Activated CD4-positive, alpha-beta memory T cell treated with anti-CD3 and anti-CD28 coated beads, Interleukin-2, amount 10 ng/mL, durations not matched to agents 7 days and 5 days (primary cell): ENCODE measurements at regions of chr6 and their contacts with region 1.

Region 1: GRCh38 chr6:43506667-43507471 is 3.3 kb downstream of the LRRC73 start:
- DNase-seq: peak; percentile 83
- H3K4me3 Mint-ChIP-seq: no peak overlapping the region
- H3K27ac Mint-ChIP-seq: no peak overlapping the region
- H3K4me1 Mint-ChIP-seq: peaks cover 16% of the 10 kb centered on the region
- H3K27me3 Mint-ChIP-seq: peaks cover 17% of the 10 kb centered on the region

Region 2: GRCh38 chr6:41872147-41872546 is 1634.7 kb before region 1 on chr6:
- CTCF ChIA-PET with region 1: no interaction called
- POLR2A ChIA-PET with region 1: no interaction called
- DNase-seq: no peak
- H3K4me3 Mint-ChIP-seq: no peak overlapping the region
- H3K27ac Mint-ChIP-seq: no peak overlapping the region
- H3K4me1 Mint-ChIP-seq: no peaks in the 10 kb centered on the region
- H3K27me3 Mint-ChIP-seq: no peaks in the 10 kb centered on the region

Region 3: DNA sequence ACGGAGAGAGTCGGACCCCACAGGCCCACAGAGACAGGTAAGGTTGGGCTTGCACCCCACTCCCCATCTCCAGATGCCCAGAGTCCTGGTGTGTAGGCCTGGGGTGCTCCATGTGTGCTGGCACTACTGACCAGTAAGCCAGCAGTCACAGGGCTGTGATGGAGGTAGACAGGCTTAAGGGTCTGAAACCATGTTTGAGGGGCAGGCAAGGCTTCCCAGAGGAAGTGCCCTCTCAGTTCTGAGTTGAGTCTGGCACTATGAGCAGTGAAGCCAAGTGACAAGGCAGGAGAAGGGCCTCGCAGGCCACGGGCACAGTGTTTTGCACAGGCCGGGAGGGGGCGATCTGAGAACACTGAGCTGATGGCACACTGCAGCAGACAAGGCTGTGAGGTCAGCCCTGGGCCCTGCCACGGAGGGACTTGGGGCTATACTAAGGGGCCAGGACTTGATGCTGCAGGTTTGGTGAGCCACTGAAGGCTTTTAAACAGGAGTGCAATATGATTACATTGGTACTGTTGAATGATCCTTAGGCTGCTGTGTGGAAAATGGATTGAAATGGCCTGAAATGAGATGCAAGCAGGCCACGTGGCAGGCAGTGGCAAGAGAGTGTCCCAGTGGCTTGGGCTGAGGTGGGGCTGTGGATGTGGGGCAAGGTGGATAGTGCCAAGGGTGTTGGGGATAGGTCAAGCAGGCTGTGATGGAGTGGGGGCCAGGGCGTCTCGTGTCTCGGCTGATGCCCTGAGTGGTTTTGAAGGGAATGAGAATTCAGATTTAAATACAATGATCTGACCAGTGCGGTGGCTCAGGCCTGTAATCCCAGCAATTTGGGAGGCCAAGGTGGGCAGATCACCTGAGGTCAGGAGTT is 243.3 kb before region 1 on chr6:
- CTCF ChIA-PET with region 1: interaction called, 21 read pairs
- POLR2A ChIA-PET with region 1: interaction called, 5 read pairs
- DNase-seq: peak; percentile 82
- H3K4me3 Mint-ChIP-seq: no peak overlapping the region
- H3K27ac Mint-ChIP-seq: no peak overlapping the region
- H3K4me1 Mint-ChIP-seq: no peaks in the 10 kb centered on the region
- H3K27me3 Mint-ChIP-seq: peaks cover 12% of the 10 kb centered on the region

Region 4: DNA sequence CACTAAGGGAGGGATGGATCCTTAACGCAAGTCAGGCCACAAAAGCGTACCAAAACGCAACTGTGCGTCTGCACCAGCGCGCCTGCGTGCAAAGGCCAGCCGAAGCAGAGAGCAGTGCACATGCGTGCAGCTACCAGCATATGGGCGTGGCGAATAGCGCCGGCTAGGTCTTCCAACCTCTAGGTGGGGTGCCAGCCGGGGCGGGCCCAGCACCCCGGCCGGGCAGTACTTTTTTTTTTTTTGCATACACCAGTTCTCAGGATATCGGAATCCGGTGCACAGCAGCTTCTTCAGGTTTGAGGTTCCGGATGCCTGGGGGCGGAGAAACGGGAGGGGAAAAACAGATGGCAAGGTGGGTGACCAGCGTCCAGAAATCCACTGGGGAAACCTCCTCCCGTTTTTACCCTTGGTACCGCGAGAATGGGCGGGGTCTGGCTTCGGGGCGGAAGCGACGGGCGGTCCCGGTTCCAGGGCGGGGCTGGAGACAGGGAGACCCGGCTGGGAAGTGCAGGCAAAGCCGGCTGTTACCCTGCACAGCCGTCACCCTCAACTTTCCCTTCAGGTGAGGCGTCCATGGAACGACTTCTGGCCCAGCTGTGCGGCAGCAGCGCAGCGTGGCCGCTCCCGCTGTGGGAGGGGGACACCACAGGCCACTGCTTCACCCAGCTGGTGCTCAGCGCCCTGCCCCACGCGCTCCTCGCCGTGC is 79.3 kb before region 1 on chr6 and contains the start of gene ABCC10:
- CTCF ChIA-PET with region 1: interaction called, 11 read pairs
- POLR2A ChIA-PET with region 1: interaction called, 3 read pairs
- DNase-seq: peak; percentile 96
- H3K4me3 Mint-ChIP-seq: peak within 1 kb of the TSS; percentile 93
- H3K27ac Mint-ChIP-seq: peak within 1 kb of the TSS; percentile 92
- H3K4me1 Mint-ChIP-seq: peaks cover 23% of the 10 kb centered on the region
- H3K27me3 Mint-ChIP-seq: no peaks in the 10 kb centered on the region
- total RNA-seq, gene ABCC10: 46.8 to 49.8 TPM

Region 5: DNA sequence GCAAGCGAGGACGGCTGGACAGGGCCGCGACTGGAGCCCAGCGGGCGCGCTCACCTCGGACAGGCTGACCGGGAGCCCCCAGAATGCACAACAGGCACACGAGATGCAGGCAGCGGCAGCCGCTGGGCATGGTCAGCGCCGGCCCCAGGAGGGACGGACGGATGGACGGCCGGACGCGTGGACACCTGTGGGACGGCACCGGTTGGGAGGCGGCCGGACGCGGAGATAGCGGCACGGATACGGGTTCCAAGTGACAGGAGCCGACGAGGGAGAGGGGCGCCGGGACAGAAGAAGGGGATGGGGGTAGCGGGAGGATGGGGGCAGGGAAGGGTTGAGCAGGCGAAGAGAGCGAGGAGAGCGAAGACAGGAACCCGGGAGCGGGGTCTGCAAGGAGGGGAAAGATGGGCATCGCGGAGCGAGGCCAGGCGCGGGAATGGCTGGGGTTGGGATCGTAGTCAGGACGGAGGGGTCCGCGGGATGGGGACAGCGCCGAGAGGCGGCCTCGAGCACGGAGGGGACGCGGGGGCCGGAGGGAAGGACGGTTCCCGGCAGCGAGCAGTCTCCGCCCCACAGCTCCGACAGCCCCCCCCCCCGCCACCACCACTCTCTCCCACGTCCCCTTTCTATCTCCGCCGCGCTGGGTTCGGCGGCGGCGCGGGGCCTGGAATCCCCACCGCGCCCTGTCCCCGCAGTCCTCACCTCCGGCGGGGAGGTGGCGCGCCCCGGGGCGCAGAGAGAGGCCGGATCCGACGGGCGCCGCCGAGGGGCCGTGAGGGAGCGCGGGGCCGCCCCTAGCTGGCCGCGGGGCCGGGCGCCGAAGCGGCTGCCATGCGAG is 52.0 kb before region 1 on chr6:
- CTCF ChIA-PET with region 1: interaction called, 62 read pairs
- POLR2A ChIA-PET with region 1: interaction called, 9 read pairs
- DNase-seq: peak; percentile 26
- H3K4me3 Mint-ChIP-seq: peak overlapping the region; percentile 66
- H3K27ac Mint-ChIP-seq: no peak overlapping the region
- H3K4me1 Mint-ChIP-seq: peaks cover 14% of the 10 kb centered on the region
- H3K27me3 Mint-ChIP-seq: peaks cover 24% of the 10 kb centered on the region

Region 6: DNA sequence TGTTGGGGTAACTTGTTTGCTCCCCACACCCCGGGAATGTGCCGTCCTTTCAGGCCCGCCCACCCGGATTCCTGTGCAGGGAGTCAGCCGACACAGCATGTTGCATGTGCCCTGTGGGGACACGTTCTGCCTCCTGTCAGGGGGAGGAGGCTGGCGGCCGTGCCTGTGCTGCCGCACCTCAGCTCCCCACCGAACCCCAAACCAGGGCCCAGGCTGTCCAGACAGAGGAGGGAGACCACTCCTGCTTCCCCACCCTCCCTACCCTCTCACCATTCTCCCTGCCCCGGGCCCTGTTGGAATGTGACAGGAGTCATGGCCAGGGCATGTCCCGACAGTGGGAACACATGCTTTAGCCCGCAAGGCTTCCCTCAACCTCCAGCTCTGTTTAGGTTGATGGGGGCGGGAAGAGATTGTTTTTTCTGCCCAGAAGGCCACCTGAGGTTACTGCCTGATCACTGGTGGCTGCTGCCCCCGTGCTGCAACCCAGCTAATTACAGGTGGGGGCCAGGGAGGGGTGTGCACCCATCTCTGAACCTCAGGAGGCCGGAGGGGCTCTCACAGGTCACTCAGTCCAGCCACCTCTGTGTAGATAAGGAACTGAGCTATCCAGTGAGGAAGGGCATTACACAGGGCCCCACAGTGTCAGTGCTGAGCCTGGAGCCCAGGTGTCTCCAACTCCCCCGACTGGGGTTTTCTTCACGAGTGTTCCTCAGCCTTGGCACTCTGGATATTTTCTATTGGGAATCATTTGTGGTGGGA is 10.3 kb before region 1 on chr6:
- CTCF ChIA-PET with region 1: interaction called, 35 read pairs
- POLR2A ChIA-PET with region 1: interaction called, 5 read pairs
- DNase-seq: no peak
- H3K4me3 Mint-ChIP-seq: no peak overlapping the region
- H3K27ac Mint-ChIP-seq: no peak overlapping the region
- H3K4me1 Mint-ChIP-seq: peaks cover 23% of the 10 kb centered on the region
- H3K27me3 Mint-ChIP-seq: no peaks in the 10 kb centered on the region

Region 7: GRCh38 chr6:43516697-43517504 is 10.0 kb after region 1 on chr6 and contains the starts of genes POLR1C and YIPF3:
- CTCF ChIA-PET with region 1: interaction called, 43 read pairs
- POLR2A ChIA-PET with region 1: interaction called, 31 read pairs
- DNase-seq: peak; percentile 98
- H3K4me3 Mint-ChIP-seq: no peak within 1 kb of the TSS
- H3K27ac Mint-ChIP-seq: no peak within 1 kb of the TSS
- H3K4me1 Mint-ChIP-seq: peaks cover 29% of the 10 kb centered on the region
- H3K27me3 Mint-ChIP-seq: no peaks in the 10 kb centered on the region
- total RNA-seq, gene POLR1C: 24.1 to 24.3 TPM
- total RNA-seq, gene YIPF3: 71.5 to 77.4 TPM